ENCODE measurements at regions of chr7 and their contacts with region 1.

Region 1: GRCh38 chr7:1569833-1570633 is at the start of gene PSMG3:
- DNase-seq: peak; percentile 89 to 93
- ATAC-seq: peak; percentile 92 to 96 (median 92)
- H3K4me3 ChIP-seq: peak within 1 kb of the TSS; percentile 94
- H3K4me3 Mint-ChIP-seq: peak within 1 kb of the TSS; percentile 90
- H3K27ac ChIP-seq: peak within 1 kb of the TSS; percentile 91
- H3K27ac Mint-ChIP-seq: peak within 1 kb of the TSS; percentile 85 to 88
- H3K4me1 ChIP-seq: peaks cover 25% of the 10 kb centered on the region
- H3K4me1 Mint-ChIP-seq: peaks cover 17 to 20% of the 10 kb centered on the region in 2 donors
- H3K27me3 ChIP-seq: no peaks in the 10 kb centered on the region
- H3K27me3 Mint-ChIP-seq: no peaks in the 10 kb centered on the region
- CTCF ChIP-seq: peak; percentile 12
- total RNA-seq, gene PSMG3: 19.0 to 21.4 (median 20.5) TPM

Region 2: GRCh38 chr7:1532483-1533424 is 37.3 kb before region 1 on chr7:
- intact Hi-C with region 1: loop called (anchors 1 kb)
- DNase-seq: peak; percentile 60 to 76
- ATAC-seq: peak; percentile 52 to 61 (median 53)
- H3K4me3 ChIP-seq: peak overlapping the region; percentile 55
- H3K4me3 Mint-ChIP-seq: peak overlapping the region; percentile 93
- H3K27ac ChIP-seq: peak overlapping the region; percentile 89
- H3K27ac Mint-ChIP-seq: peak overlapping the region; percentile 94 to 96
- H3K4me1 ChIP-seq: peaks cover 43% of the 10 kb centered on the region
- H3K4me1 Mint-ChIP-seq: peaks cover 19 to 27% of the 10 kb centered on the region in 2 donors
- H3K27me3 ChIP-seq: no peaks in the 10 kb centered on the region
- H3K27me3 Mint-ChIP-seq: no peaks in the 10 kb centered on the region
- CTCF ChIP-seq: no peak

Region 3: GRCh38 chr7:3469641-3470040 is 1899.6 kb after region 1 on chr7:
- intact Hi-C with region 1: no loop called
- DNase-seq: no peak
- ATAC-seq: no peak
- H3K4me3 ChIP-seq: no peak overlapping the region
- H3K4me3 Mint-ChIP-seq: no peak overlapping the region
- H3K27ac ChIP-seq: no peak overlapping the region
- H3K27ac Mint-ChIP-seq: no peak overlapping the region
- H3K4me1 ChIP-seq: no peaks in the 10 kb centered on the region
- H3K4me1 Mint-ChIP-seq: no peaks in the 10 kb centered on the region
- H3K27me3 ChIP-seq: no peaks in the 10 kb centered on the region
- H3K27me3 Mint-ChIP-seq: peaks cover 6 to 18% of the 10 kb centered on the region in 2 donors
- CTCF ChIP-seq: no peak